GM12878 (cell line): ENCODE measurements at regions of chr1 and their contacts with region 1.

Region 1: DNA sequence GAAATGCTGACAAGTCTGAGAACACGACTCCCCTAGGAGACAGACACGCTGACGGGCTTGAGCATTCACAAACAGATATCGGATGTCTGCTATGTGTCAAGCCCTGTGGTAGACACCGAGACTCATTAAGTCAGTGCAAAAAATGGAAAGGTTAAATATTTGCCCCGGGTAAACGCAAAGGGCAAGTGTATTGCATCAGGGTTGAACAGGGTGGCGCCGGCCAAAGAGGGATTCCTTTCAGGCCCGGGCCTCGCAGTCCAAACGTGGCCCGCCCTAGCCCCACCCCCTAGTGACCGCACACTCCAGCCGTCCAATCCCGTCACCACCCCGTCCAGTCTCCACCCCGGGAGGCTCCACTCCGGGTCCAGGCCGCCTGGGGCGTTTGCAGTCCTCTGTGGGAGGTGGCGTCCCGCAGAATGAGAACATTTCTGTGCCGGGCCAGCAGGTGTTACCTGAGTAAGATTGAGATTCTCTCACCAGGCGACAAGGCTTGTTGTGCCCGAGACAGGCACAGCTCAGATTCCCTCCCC is 16.3 kb upstream of the TMEM9 start:
- DNase-seq: peak; percentile 33
- ATAC-seq: peak; percentile 99
- H3K4me3 ChIP-seq: peak overlapping the region; percentile 55; the same call in 1 of the 2 replicates
- H3K27ac ChIP-seq: no peak overlapping the region
- H3K4me1 ChIP-seq: peaks cover 7% of the 10 kb centered on the region
- H3K27me3 ChIP-seq: no peaks in the 10 kb centered on the region; a peak in 1 of 4 replicates
- CTCF ChIP-seq: no peak
- EP300 ChIP-seq: no peak
- POLR2A ChIP-seq: no peak
- RAD21 ChIP-seq: no peak

Region 2: GRCh38 chr1:201137579-201138310 is 32.9 kb before region 1 on chr1:
- CTCF ChIA-PET with region 1: no interaction called
- POLR2A ChIA-PET with region 1: no interaction called
- RAD21 ChIA-PET with region 1: no interaction called
- SMC1A ChIA-PET with region 1: no interaction called
- in situ Hi-C with region 1: no loop called
- intact Hi-C with region 1: no loop called
- DNase-seq: no peak
- ATAC-seq: no peak
- H3K4me3 ChIP-seq: no peak overlapping the region
- H3K27ac ChIP-seq: no peak overlapping the region
- H3K4me1 ChIP-seq: no peaks in the 10 kb centered on the region
- H3K27me3 ChIP-seq: no peaks in the 10 kb centered on the region
- CTCF ChIP-seq: no peak
- EP300 ChIP-seq: no peak
- POLR2A ChIP-seq: no peak
- RAD21 ChIP-seq: no peak

Region 3: DNA sequence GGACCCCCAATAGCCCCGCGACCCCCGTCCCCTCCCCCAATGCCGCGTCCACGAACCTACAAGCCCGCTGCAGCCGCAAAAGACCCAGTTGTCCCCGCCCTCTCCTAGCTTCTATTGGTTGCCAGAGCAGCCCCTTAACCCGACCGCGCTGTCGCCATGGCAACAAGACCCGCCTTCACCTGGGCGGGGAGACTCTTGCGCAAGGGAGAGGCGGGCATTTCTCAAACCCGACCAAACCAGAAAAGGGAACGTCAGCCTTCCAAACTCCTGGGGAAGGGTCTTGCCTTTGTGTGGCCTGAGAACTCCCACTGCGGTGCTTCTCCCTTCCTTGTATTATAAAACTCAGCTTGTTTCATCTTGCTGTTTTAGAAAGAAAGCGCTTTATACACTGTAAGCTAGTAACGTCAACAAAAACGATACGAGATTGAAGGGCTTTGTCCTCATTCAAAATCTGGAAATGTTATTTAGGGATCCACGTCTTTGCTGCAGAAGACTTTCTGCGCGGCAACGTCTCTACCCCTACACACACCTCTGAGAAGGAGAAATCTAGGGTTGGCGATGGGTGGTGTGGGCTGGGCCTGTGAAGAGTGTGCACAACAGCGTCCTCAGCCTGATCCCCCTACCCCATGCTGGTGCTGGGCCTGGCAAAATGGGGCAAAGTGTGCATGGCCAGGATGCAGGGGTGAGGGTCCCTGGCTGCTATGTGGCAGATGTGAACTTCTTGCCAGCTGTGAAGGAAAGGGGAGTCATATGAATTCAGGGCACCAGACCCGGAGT is 16.0 kb before region 1 on chr1 and contains the start of gene TMEM9:
- CTCF ChIA-PET with region 1: interaction called, 10 read pairs
- POLR2A ChIA-PET with region 1: interaction called, 3 read pairs
- RAD21 ChIA-PET with region 1: interaction called, 5 read pairs
- SMC1A ChIA-PET with region 1: interaction called, 4 read pairs
- in situ Hi-C with region 1: no loop called
- intact Hi-C with region 1: loop called (anchors 1 kb)
- DNase-seq: peak; percentile 83
- ATAC-seq: peak; percentile 98
- H3K4me3 ChIP-seq: peak within 1 kb of the TSS; percentile 69
- H3K27ac ChIP-seq: peak within 1 kb of the TSS; percentile 57
- H3K4me1 ChIP-seq: peaks cover 12% of the 10 kb centered on the region
- H3K27me3 ChIP-seq: no peaks in the 10 kb centered on the region; a peak in 1 of 4 replicates
- CTCF ChIP-seq: no peak
- EP300 ChIP-seq: no peak
- POLR2A ChIP-seq: no peak
- RAD21 ChIP-seq: no peak
- polyA plus RNA-seq, gene TMEM9: 8.1 to 11.3 TPM

Region 4: DNA sequence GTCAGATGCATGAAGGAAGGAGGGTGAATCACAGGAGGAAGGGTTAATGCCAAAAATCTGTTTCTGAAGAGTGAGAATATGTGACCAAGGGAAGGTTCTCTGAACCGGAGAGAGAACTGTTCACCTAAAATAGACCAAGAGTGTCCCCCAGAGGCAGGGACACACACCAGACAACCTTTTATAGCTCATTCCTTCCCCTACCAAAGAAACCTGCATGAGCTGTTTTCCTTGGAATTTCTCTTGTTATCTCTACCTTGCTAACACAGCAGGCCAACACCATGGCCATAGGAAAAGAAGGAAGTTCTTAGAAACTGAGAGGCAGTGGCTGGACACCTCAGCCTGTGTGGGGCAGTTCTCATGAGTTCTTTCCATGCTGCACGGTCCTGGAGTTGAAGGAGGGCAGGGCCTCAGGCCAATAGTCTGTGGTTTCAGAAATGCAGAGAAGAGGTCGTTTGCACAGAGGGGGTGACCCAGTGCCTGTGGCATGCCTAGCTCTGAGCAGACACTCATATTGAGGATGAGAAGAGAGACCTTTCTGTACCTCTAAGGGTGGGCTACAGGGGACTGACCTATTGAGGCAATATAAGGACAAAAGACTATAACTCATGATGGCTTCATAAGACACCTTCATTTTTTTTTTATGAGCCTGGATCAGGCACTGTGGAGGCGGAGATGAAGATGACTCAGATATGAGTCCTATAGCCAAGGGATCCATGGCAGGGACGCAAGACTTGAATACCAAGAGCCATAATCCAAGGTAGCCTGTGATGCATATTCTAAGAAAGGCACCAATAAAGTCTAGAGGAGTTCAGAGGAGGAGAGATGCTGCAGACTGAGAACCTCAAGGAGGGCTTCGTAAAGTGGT is 59.4 kb after region 1 on chr1:
- CTCF ChIA-PET with region 1: no interaction called
- POLR2A ChIA-PET with region 1: no interaction called
- RAD21 ChIA-PET with region 1: no interaction called
- SMC1A ChIA-PET with region 1: no interaction called
- in situ Hi-C with region 1: no loop called
- intact Hi-C with region 1: no loop called
- DNase-seq: no peak
- ATAC-seq: no peak
- H3K4me3 ChIP-seq: no peak overlapping the region
- H3K27ac ChIP-seq: no peak overlapping the region
- H3K4me1 ChIP-seq: no peaks in the 10 kb centered on the region
- H3K27me3 ChIP-seq: peaks cover 0 to 4% of the 10 kb centered on the region in 2 experiments; a peak in 2 of 4 replicates
- CTCF ChIP-seq: no peak
- EP300 ChIP-seq: no peak
- POLR2A ChIP-seq: no peak
- RAD21 ChIP-seq: no peak